ENCODE measurements at regions of chr9 and their contacts with region 1.

Region 1: GRCh38 chr9:130042833-130043653 is at the start of gene FNBP1:
- DNase-seq: peak; percentile 90
- ATAC-seq: peak; percentile 60
- H3K4me3 Mint-ChIP-seq: peak within 1 kb of the TSS; percentile 100
- H3K27ac Mint-ChIP-seq: peak within 1 kb of the TSS; percentile 99
- H3K4me1 Mint-ChIP-seq: peaks cover 46% of the 10 kb centered on the region
- H3K27me3 Mint-ChIP-seq: no peaks in the 10 kb centered on the region
- total RNA-seq, gene FNBP1: 191 to 194 TPM

Region 2: GRCh38 chr9:129884220-129885017 is 158.6 kb before region 1 on chr9:
- POLR2A ChIA-PET with region 1: interaction called, 195 read pairs
- DNase-seq: peak; percentile 96
- ATAC-seq: peak; percentile 58
- H3K4me3 Mint-ChIP-seq: peak overlapping the region; percentile 91
- H3K27ac Mint-ChIP-seq: peak overlapping the region; percentile 97
- H3K4me1 Mint-ChIP-seq: peaks cover 45% of the 10 kb centered on the region
- H3K27me3 Mint-ChIP-seq: no peaks in the 10 kb centered on the region

Region 3: DNA sequence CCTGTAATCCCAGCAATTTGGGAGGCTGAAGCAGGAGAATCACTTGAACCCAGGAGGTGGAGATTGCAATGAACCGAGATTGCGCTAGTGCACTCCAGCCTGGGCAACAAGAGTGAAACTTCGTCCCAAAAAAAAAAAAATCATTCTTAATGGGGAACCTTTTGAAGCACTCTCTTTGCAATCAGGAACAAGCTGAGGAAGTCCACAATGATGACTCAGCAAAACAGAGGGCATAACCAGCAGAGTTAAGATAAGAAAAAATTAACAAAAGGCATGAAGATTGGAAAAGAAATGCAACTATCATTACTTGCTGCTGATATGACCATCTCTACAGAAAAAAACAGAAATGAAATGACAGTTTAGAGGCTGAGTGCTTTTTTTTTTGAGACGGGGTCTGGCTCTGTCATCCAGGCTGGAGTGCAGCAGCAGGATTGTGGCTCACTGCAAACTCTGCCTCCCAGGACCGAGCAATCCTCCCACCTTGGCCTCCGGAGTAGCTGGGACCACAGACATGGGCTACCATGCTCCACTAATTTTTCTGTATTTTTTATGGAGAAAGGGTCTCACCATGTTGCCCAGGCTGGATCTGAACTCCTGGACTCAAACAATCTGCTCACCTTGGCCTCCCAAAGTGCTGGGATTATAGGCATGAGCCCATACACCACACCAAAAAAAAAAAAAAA is 88.0 kb before region 1 on chr9:
- POLR2A ChIA-PET with region 1: interaction called, 10 read pairs
- DNase-seq: no peak
- ATAC-seq: no peak
- H3K4me3 Mint-ChIP-seq: no peak overlapping the region
- H3K27ac Mint-ChIP-seq: peak overlapping the region; percentile 59
- H3K4me1 Mint-ChIP-seq: peaks cover 23% of the 10 kb centered on the region
- H3K27me3 Mint-ChIP-seq: no peaks in the 10 kb centered on the region

Region 4: DNA sequence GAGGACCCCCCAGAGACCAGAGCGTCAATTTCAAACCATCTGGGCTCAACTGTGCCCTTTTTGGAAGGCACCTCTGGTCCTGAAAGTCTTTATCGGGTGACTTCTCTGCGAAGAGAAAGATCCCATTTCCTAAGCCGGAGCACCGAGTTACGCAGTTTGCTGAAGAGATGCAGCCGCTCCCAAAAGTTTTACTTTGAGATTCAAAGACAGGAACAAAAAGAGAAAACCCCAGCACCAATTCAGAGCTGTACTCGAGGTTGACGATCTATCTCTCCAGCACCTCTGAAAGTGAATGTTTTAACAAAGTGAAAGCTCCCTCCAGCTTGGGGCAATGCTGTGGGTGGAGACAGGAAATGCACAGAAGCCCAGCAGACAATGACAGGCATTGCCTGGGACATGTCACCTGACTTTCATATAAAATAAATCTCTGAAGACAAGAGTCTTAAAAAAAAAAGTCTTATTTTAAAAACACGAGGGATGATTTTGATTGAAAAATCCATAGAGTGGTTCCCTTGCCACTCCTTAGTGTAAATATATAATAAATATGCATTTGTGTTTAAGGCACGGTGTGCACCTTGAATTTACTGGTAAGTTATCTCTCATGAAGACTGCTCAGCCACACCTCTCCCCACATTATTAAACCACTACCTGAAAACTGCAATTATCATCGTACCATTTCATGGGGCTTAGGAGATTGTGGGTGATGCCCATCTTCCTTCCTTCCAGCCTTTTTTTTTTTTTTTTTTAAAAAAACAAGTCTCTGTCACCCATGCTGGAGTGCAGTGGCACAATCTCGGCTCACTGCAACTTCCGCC is 79.9 kb before region 1 on chr9:
- POLR2A ChIA-PET with region 1: interaction called, 19 read pairs
- DNase-seq: peak; percentile 49
- ATAC-seq: peak; percentile 97
- H3K4me3 Mint-ChIP-seq: peak overlapping the region; percentile 86
- H3K27ac Mint-ChIP-seq: peak overlapping the region; percentile 98
- H3K4me1 Mint-ChIP-seq: peaks cover 52% of the 10 kb centered on the region
- H3K27me3 Mint-ChIP-seq: no peaks in the 10 kb centered on the region

Region 5: DNA sequence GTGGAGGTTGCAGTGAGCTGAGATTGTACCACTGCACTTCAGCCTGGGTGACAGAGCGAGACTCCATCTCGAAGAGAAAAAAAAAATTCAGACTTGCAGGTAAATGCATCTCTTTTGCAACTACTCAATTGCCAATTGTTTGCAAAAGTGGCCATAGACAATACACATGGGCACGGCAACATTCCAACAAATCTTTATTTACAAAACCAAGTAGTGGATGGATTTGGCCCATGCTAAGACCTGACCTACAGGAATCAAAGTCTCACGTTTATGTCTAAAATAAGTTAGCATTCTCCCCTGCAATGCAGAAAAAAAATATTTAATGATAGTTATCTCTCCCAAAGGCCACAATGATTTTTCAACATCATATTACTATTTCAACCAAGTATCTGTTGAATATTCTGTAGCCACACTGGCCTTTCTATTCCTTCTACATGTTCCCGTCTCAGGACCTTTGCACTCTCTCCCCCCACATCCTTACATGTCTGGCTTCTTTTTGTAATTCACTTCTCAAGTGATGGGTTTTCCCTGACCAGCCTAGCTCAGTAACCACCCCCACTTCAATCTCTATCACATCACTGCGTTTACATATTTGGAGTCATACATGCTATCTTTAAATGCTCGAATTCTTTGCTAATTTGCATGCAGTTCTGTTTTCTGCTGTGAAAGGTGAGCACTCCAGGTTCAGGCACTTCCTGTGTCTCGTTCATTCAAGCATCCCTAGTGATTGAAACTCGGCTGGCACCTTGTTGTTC is 54.3 kb before region 1 on chr9:
- POLR2A ChIA-PET with region 1: interaction called, 20 read pairs
- DNase-seq: no peak
- ATAC-seq: no peak
- H3K4me3 Mint-ChIP-seq: peak overlapping the region; percentile 32
- H3K27ac Mint-ChIP-seq: peak overlapping the region; percentile 82
- H3K4me1 Mint-ChIP-seq: peaks cover 45% of the 10 kb centered on the region
- H3K27me3 Mint-ChIP-seq: no peaks in the 10 kb centered on the region

Region 6: GRCh38 chr9:130029223-130029973 is 13.6 kb before region 1 on chr9:
- POLR2A ChIA-PET with region 1: interaction called, 13 read pairs
- DNase-seq: no peak
- ATAC-seq: peak; percentile 16
- H3K4me3 Mint-ChIP-seq: peak overlapping the region; percentile 47
- H3K27ac Mint-ChIP-seq: peak overlapping the region; percentile 71
- H3K4me1 Mint-ChIP-seq: peaks cover 70% of the 10 kb centered on the region
- H3K27me3 Mint-ChIP-seq: no peaks in the 10 kb centered on the region

Region 7: DNA sequence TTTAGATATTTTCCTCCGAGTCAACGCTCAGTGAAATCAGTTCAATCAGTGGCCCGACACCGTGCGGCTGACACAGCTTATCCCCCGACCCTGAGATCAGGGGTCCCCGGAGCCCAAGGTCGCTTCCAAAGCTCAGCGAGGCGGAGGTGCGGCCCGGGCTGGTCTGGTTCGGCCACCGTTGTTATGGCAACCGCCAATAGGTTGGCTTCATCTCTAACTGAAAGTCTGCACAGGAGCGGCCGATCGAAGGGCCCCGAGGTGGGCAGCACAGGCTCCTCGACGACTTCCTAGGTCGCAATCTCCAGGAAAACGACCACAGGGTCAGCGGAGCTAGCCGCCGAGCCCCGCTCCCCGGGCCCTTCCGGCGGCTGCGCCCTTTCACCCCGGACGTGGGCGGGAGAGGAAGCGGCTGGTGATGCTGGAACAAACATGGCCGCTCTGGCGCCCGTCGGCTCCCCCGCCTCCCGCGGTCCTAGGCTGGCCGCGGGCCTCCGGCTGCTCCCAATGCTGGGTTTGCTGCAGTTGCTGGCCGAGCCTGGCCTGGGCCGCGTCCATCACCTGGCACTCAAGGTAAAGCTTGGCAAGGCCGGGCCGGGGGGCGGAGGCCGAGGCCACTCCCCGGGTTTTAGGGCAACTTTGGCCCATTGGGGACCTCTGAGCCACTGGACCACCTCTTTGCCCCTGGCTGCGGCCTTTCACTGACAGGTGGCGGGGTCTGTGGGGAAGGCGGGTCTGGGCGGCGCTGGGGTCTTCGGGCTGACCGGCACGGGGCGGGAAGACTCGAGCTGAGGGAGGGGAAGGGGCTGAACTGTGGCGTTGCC is 10.7 kb after region 1 on chr9 and contains the start of gene GPR107:
- POLR2A ChIA-PET with region 1: interaction called, 23 read pairs
- DNase-seq: peak; percentile 86
- ATAC-seq: peak; percentile 94
- H3K4me3 Mint-ChIP-seq: peak within 1 kb of the TSS; percentile 96
- H3K27ac Mint-ChIP-seq: peak within 1 kb of the TSS; percentile 90
- H3K4me1 Mint-ChIP-seq: peaks cover 18% of the 10 kb centered on the region
- H3K27me3 Mint-ChIP-seq: no peaks in the 10 kb centered on the region
- total RNA-seq, gene GPR107: 23.2 to 25.1 TPM

Region 8: DNA sequence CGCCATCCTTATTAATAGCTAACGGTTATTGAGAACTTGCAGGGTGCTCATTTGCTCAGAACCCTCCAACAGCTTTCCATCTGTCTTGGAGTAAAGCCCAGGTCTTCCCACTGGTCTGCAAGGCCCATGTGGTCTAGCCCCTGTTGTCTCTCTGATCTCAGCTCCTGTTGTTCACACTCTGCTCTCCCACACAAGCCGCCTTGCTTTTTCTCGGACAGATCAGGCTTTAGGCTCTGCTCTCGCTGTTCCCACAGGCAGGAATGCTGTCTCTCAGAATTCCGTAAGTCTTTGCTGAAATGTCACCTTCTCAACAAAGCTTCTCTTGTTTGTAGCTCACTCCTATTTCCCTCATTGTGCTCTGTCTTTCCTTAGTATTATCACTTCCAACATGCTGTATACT is 45.0 kb after region 1 on chr9:
- POLR2A ChIA-PET with region 1: no interaction called
- DNase-seq: no peak
- ATAC-seq: no peak
- H3K4me3 Mint-ChIP-seq: no peak overlapping the region
- H3K27ac Mint-ChIP-seq: no peak overlapping the region
- H3K4me1 Mint-ChIP-seq: peaks cover 5% of the 10 kb centered on the region
- H3K27me3 Mint-ChIP-seq: no peaks in the 10 kb centered on the region